ENCODE measurements at regions of chrX and their contacts with region 1.

Region 1: DNA sequence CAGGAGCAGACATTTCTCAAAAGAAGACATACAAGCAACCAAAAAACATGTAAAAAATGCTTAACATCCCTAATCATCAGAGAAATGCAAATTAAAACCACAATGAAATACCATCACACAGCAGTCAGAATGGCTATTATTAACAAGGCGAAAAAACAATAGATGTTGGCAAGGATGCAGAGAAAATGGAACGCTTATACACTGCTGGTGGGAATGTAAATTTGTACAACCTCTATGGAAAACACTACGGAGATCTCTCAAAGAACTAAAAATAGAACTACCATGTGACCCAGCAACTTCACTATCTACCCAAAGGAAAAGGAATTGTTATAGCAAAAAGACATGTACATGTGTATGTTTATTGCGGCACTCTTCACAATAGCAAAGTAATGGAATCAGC is 71.5 kb downstream of the PPP4R3C start:
- DNase-seq: no peak
- H3K4me3 Mint-ChIP-seq: no peak overlapping the region
- H3K27ac Mint-ChIP-seq: no peak overlapping the region
- H3K4me1 Mint-ChIP-seq: no peaks in the 10 kb centered on the region
- H3K27me3 Mint-ChIP-seq: no peaks in the 10 kb centered on the region
- CTCF ChIP-seq: no peak

Region 2: DNA sequence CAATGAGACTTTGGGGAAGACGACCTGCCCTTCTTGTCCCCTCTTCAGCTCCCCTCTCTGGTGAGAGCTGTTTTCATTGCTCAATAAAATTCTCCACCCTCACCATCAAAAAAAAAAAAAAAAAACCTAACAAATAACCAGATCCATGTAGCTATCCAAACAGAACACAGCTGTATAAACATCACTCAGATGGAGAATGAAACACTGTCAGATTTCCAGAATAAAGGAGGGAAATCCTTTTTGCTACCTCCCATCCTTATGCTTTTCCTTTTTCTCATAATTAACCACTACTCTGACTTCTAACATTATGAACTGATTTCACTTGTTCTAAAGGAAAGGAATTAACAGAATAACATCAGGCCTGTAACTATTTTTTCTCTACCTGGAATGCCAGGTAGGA is 84.1 kb before region 1 on chrX:
- CTCF ChIA-PET with region 1: no interaction called
- intact Hi-C with region 1: loop called (anchors 2 kb)
- DNase-seq: no peak
- H3K4me3 Mint-ChIP-seq: no peak overlapping the region
- H3K27ac Mint-ChIP-seq: no peak overlapping the region
- H3K4me1 Mint-ChIP-seq: no peaks in the 10 kb centered on the region
- H3K27me3 Mint-ChIP-seq: no peaks in the 10 kb centered on the region
- CTCF ChIP-seq: no peak

Measured in Calu3 (cell line).